Gastrocnemius medialis (tissue), 4 donors: ENCODE measurements at regions of chr9 and their contacts with region 1.

Region 1: DNA sequence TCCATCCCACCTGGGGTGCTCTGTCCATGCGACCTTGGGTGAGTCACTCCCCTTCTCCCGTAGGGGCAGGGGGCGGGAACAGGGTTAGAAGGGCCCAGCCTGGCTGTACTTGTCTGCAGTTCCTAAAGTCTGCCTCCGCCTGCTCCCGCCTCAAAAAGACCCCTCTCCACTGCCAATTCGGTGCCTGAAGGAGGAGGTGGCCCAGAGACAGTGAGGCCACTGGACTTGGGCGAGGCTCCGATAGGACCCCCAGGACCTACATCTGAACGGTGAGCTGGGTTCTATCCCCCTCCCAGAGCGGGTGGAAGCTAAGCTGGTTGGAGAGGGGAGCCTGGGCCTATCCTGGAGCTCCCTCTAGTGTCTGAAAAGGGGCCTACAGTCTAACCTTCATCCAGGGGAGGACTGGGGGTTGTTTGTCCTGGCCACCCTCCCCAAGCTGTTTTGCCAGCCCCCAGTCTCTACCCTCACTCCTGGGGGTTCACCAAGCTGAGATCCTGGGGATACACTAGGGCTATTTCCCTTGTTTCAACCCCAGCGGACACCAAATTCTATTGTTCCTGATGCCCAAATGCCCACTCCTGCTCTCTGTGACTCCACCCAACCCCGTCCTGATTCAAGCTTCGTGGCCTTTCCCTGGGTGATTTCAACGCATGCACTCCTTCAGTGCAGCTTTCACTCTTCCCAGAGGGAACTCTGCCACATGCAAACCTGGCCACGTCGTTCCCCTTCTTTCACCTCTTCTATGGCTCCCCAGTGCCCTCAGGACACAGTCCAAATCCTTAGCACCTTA is 6.1 kb upstream of the CRB2 start:
- DNase-seq: peak in 1 of 2 donors; percentile 27
- ATAC-seq: peak; percentile 75 to 87
- H3K4me3 ChIP-seq: no peak overlapping the region
- H3K27ac ChIP-seq: no peak overlapping the region
- H3K4me1 ChIP-seq: peaks cover 5% of the 10 kb centered on the region in 2 donors
- H3K27me3 ChIP-seq: peaks cover 0 to 7% (median 3%) of the 10 kb centered on the region in 3 donors
- CTCF ChIP-seq: peak; percentile 73 to 97 (median 96)
- POLR2A ChIP-seq: no peak

Region 2: DNA sequence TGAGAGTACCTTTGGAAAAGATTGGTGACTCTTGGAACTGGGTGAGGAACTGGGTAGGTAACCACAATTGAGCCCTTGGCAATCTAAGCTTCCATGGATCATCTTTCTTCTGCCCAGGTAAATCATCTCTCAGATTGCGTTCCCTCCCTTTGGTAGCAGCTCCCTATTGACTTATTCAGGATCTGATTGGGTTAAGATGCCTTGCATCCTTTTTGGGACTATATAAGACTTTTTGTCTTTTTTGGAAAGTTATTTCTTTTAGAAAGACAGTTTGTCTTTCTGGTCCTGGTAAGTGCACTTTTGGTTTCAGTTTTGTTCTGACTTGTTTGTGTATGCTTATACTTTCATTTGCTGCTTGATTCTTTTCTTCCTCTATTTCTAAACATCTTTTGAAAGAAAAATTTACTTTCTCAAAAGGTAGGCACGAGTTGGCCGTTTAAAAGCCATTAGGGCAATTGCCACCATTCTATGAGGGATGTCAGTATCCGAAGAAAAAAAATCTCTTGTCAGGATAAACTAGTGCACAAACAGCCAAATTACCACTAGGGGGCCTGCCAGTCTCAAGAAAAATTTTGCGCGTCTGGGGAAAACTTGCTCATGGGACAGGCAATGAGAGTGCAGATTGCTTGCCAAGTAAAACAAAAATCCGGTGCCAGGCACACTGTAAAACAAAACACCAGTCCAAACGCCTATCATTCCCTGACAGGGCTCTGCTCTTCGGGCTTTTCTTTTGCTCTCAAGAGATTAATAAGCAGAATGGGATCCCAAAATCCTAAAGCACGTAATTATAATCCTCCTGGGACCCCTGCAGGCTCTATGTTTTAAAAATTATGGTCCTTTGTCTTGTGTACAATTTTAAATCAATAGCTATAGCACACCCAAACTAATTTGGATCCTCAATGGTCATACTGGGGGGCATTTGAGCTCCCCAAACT is 885.0 kb before region 1 on chr9:
- in situ Hi-C with region 1: loop called in 1 of 4 experiments (anchors 25 kb)
- intact Hi-C with region 1: no loop called
- DNase-seq: peak; percentile 43 to 52
- ATAC-seq: peak; percentile 82 to 97
- H3K4me3 ChIP-seq: peak overlapping the region; percentile 26 to 62 (median 36)
- H3K27ac ChIP-seq: no peak overlapping the region
- H3K4me1 ChIP-seq: peaks cover 5 to 9% of the 10 kb centered on the region in 2 donors
- H3K27me3 ChIP-seq: peaks cover 0 to 3% (median 0%) of the 10 kb centered on the region in 3 donors
- CTCF ChIP-seq: peak; percentile 62 to 80 (median 71)
- POLR2A ChIP-seq: no peak

Region 3: DNA sequence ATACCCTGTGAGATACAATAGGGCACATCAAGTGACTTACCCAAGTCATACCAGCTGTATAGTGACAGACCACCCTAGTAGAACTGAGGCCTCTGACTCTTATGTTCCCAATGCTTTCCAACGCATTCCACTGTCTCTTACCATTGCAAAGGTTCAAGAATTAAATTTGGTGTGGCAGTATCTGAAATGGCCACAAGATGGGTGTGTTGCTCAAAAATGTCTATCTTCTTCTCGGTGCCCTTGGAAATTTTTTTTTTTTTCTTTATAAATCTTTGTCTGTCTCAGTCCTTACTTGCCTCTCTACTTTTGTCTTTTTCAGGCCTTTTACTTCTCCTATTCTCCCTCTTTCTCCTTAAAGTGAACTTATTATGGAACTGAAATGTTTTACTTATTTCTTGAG is 268.1 kb before region 1 on chr9:
- in situ Hi-C with region 1: loop called in 2 of 4 experiments (anchors 10 to 25 kb)
- intact Hi-C with region 1: loop called (anchors 10 kb)
- DNase-seq: no peak
- ATAC-seq: no peak
- H3K4me3 ChIP-seq: no peak overlapping the region
- H3K27ac ChIP-seq: no peak overlapping the region
- H3K4me1 ChIP-seq: no peaks in the 10 kb centered on the region
- H3K27me3 ChIP-seq: no peaks in the 10 kb centered on the region
- CTCF ChIP-seq: peak in 3 of 5 experiments; percentile 10 to 34 (median 22)
- POLR2A ChIP-seq: no peak

Region 4: GRCh38 chr9:123102375-123103110 is 247.3 kb before region 1 on chr9:
- in situ Hi-C with region 1: loop called in 3 of 4 experiments (anchors 25 kb)
- intact Hi-C with region 1: no loop called
- DNase-seq: no peak
- ATAC-seq: no peak
- H3K4me3 ChIP-seq: no peak overlapping the region
- H3K27ac ChIP-seq: no peak overlapping the region
- H3K4me1 ChIP-seq: no peaks in the 10 kb centered on the region
- H3K27me3 ChIP-seq: no peaks in the 10 kb centered on the region
- CTCF ChIP-seq: no peak
- POLR2A ChIP-seq: no peak

Region 5: GRCh38 chr9:123112015-123112975 is 237.6 kb before region 1 on chr9:
- in situ Hi-C with region 1: loop called in 2 of 4 experiments (anchors 25 kb)
- intact Hi-C with region 1: loop called (anchors 10 kb)
- DNase-seq: no peak
- ATAC-seq: no peak
- H3K4me3 ChIP-seq: no peak overlapping the region
- H3K27ac ChIP-seq: peak overlapping the region in 1 of 4 donors; percentile 44
- H3K4me1 ChIP-seq: peaks cover 7% of the 10 kb centered on the region in 2 donors
- H3K27me3 ChIP-seq: no peaks in the 10 kb centered on the region
- CTCF ChIP-seq: no peak
- POLR2A ChIP-seq: no peak

Region 6: DNA sequence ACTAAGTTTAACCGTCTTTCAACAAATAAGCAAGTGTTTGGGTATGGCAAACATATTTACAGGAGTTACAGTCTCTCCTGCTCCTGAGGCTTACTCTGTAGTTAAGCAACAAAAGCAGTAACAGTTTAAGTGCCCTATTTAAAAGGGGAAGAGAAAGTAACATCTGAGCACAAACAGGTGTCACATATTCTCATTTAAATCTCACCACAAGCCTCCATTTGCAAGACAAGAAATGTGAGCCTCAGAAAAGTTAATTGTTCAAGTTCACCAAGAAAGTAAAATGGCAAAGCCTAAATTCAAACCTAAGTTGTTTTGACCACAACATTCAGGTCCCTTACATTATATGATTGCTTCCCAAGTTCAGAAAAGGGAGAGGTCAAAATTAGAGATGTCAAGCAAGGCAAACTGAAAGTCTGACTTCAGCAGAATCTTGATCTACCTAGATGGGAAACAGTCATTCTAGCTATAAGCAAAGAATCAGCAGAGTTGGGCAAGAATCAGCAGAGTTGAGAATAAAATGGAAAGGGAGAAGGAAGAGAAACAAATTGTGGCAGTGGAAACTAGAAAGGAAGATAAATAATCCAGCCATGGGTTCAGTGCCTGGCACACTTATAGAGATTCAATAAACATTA is 174.9 kb before region 1 on chr9:
- in situ Hi-C with region 1: loop called in 1 of 4 experiments (anchors 25 kb)
- intact Hi-C with region 1: no loop called
- DNase-seq: no peak
- ATAC-seq: no peak
- H3K4me3 ChIP-seq: no peak overlapping the region
- H3K27ac ChIP-seq: no peak overlapping the region
- H3K4me1 ChIP-seq: peaks cover 7 to 12% of the 10 kb centered on the region in 2 donors
- H3K27me3 ChIP-seq: no peaks in the 10 kb centered on the region
- CTCF ChIP-seq: no peak
- POLR2A ChIP-seq: no peak

Region 7: GRCh38 chr9:123268240-123268949 is 81.5 kb before region 1 on chr9 and contains the start of gene STRBP:
- in situ Hi-C with region 1: no loop called
- intact Hi-C with region 1: loop called (anchors 5 kb)
- DNase-seq: peak; percentile 84 to 86
- ATAC-seq: peak; percentile 87 to 89
- H3K4me3 ChIP-seq: peak within 1 kb of the TSS; percentile 64 to 93 (median 74)
- H3K27ac ChIP-seq: peak within 1 kb of the TSS; percentile 70 to 86 (median 82)
- H3K4me1 ChIP-seq: no peaks in the 10 kb centered on the region
- H3K27me3 ChIP-seq: no peaks in the 10 kb centered on the region
- CTCF ChIP-seq: peak in 3 of 5 experiments; percentile 15 to 30 (median 22)
- POLR2A ChIP-seq: peak; percentile 44 to 57
- total RNA-seq, gene STRBP: 5.0 to 25.0 (median 13.2) TPM

Region 8: GRCh38 chr9:123322273-123323195 is 27.4 kb before region 1 on chr9:
- in situ Hi-C with region 1: no loop called
- intact Hi-C with region 1: no loop called
- DNase-seq: no peak
- ATAC-seq: no peak
- H3K4me3 ChIP-seq: no peak overlapping the region
- H3K27ac ChIP-seq: peak overlapping the region in 1 of 4 donors; percentile 23
- H3K4me1 ChIP-seq: peaks cover 8 to 13% of the 10 kb centered on the region in 2 donors
- H3K27me3 ChIP-seq: no peaks in the 10 kb centered on the region
- CTCF ChIP-seq: no peak
- POLR2A ChIP-seq: no peak